ENCODE measurements at regions of chr5 and their contacts with region 1.

Region 1: GRCh38 chr5:179407191-179408175 is 62.2 kb upstream of the ADAMTS2 start:
- DNase-seq: no peak

Region 2: GRCh38 chr5:178417391-178417811 is 990.1 kb before region 1 on chr5:
- intact Hi-C with region 1: no loop called
- DNase-seq: no peak

Region 3: GRCh38 chr5:179438011-179438441 is 30.5 kb after region 1 on chr5:
- intact Hi-C with region 1: loop called in 1 of 2 experiments (anchors 1 kb)
- DNase-seq: peak; percentile 67

Measured in posterior vena cava (tissue), 2 donors.